WTC11 (cell line): ENCODE measurements at regions of chr22 and their contacts with region 1.

Region 1: GRCh38 chr22:41596776-41597634 is 7.4 kb upstream of the PMM1 start:
- DNase-seq: peak; percentile 79
- ATAC-seq: peak; percentile 95
- H3K4me3 Mint-ChIP-seq: no peak overlapping the region
- H3K27ac Mint-ChIP-seq: no peak overlapping the region
- H3K4me1 Mint-ChIP-seq: no peaks in the 10 kb centered on the region
- H3K27me3 Mint-ChIP-seq: peaks cover 16% of the 10 kb centered on the region; the same call in 1 of the 2 replicates
- CTCF ChIP-seq: peak; percentile 84

Region 2: DNA sequence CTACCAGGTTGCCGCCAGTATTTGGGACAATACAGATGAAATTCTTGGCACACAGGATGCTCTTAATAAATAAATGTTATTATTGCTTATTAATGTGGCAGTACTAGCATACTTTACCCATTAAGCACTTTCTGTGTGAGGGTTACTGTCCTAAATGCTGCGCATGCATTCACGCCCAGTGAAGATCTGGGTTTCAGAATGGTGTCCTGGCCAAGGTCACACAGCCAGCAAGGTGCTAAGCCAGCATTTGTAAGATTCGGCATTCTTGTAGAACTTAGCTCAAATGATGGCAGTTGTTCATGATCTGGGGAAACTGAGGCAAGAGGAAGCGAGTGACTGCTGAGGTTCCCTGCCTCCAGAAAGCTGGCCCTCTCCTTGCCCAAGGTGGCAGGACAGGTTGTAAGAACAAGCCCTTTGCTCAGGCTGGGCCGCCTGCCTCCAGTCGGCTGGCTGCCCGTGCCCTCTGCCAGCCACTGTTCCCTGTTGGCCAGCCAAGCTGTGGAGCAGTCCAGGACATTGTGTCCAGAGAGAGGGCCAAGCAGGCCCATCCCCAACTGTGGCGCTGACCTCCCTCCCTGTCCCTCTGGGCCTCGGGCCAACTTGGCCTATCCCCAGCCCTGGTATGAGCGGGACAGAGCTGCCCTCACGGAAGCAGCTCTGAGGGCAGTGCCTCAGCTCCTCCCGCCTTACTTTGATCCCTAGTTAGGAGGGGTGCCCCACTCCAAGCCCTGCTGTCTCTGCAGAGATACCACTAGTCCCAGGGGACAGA is 179.2 kb before region 1 on chr22:
- CTCF ChIA-PET with region 1: no interaction called
- POLR2A ChIA-PET with region 1: no interaction called
- DNase-seq: no peak
- ATAC-seq: no peak
- H3K4me3 Mint-ChIP-seq: no peak overlapping the region
- H3K27ac Mint-ChIP-seq: peak overlapping the region; percentile 24; the same call in 1 of the 2 replicates
- H3K4me1 Mint-ChIP-seq: peaks cover 9% of the 10 kb centered on the region
- H3K27me3 Mint-ChIP-seq: no peaks in the 10 kb centered on the region
- CTCF ChIP-seq: no peak

Region 3: GRCh38 chr22:41557401-41558240 is 39.4 kb before region 1 on chr22:
- CTCF ChIA-PET with region 1: interaction called, 10 read pairs
- POLR2A ChIA-PET with region 1: no interaction called
- DNase-seq: peak; percentile 39
- ATAC-seq: peak; percentile 16; the same call in 1 of the 2 replicates
- H3K4me3 Mint-ChIP-seq: no peak overlapping the region
- H3K27ac Mint-ChIP-seq: no peak overlapping the region; the same call in 1 of the 2 replicates
- H3K4me1 Mint-ChIP-seq: peaks cover 37% of the 10 kb centered on the region
- H3K27me3 Mint-ChIP-seq: no peaks in the 10 kb centered on the region
- CTCF ChIP-seq: no peak

Region 4: DNA sequence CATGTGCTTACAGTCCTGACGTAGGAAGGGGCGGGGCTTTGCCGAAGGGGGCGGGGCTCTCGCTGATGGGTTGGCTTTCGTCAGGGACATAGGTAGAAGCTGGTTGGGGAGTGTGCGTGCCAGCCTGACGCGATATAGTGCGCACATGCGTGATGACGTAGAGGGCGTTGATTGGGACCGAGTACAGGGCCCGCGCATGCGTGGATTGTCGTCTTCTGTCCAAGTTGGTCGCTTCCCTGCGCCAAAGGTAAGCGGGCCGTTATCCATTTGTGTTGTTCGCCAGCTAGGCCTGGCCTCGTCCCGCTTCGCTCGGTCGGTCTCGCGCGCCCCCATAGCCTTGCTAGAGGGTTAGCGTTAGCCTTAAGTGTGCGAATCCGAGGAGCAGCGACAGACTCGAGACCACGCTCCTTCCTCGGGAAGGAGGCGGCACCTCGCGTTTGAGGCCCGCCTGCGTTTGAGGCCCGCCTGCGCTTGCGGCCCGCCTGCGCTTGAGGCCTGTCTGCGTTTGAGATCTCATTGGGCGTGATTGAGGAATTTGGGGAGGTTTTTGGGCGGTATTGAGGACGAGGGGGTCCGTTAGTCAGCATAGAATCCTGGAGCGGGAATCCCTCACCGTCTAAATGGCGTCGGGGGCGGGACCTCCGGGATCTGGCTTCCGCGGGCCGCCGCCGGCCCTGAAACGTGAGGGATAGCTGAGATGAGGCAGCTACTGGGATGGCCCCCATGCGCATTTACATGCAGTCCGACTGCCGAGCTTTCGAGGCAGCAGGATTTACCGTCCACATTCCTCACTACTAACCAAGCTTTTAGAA is 24.3 kb after region 1 on chr22 and contains the start of gene XRCC6:
- CTCF ChIA-PET with region 1: interaction called, 45 read pairs
- POLR2A ChIA-PET with region 1: no interaction called
- DNase-seq: peak; percentile 100
- ATAC-seq: peak; percentile 92
- H3K4me3 Mint-ChIP-seq: peak within 1 kb of the TSS; percentile 94
- H3K27ac Mint-ChIP-seq: peak within 1 kb of the TSS; percentile 99
- H3K4me1 Mint-ChIP-seq: peaks cover 20% of the 10 kb centered on the region
- H3K27me3 Mint-ChIP-seq: no peaks in the 10 kb centered on the region; the same call in 1 of the 2 replicates
- CTCF ChIP-seq: no peak
- total RNA-seq, gene XRCC6: 410 to 474 TPM (median 420 TPM) in 3 replicates